ENCODE measurements at regions of chr2 and their contacts with region 1.

Region 1: GRCh38 chr2:69674316-69674670 is 30.8 kb upstream of the AAK1 start:
- DNase-seq: no peak
- H3K4me3 Mint-ChIP-seq: no peak overlapping the region
- H3K27ac Mint-ChIP-seq: no peak overlapping the region
- H3K4me1 Mint-ChIP-seq: peaks cover 25% of the 10 kb centered on the region
- H3K27me3 Mint-ChIP-seq: no peaks in the 10 kb centered on the region

Region 2: DNA sequence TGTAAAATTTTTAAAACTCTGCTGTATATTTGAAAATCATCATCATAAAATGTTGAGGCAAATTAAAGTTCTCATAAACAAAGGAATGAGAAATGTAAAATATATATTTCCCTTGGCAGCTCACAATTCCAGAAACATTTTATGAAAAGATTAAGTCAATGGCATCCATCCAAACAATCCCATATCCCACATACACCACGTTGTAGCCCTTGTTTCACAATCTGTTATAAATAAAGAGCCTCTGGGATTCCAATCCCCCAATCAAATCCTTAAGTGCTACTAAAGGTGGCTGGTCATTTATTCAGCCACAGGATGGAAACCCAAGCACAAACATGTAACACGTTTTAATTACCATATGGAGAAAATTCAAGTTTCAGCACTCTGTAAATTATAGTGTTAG is 339.0 kb before region 1 on chr2:
- intact Hi-C with region 1: no loop called
- DNase-seq: no peak
- H3K4me3 Mint-ChIP-seq: no peak overlapping the region
- H3K27ac Mint-ChIP-seq: no peak overlapping the region
- H3K4me1 Mint-ChIP-seq: no peaks in the 10 kb centered on the region
- H3K27me3 Mint-ChIP-seq: no peaks in the 10 kb centered on the region

Region 3: GRCh38 chr2:69689466-69689865 is 15.2 kb after region 1 on chr2:
- intact Hi-C with region 1: loop called (anchors 2 kb)
- DNase-seq: no peak
- H3K4me3 Mint-ChIP-seq: no peak overlapping the region
- H3K27ac Mint-ChIP-seq: no peak overlapping the region
- H3K4me1 Mint-ChIP-seq: peaks cover 52% of the 10 kb centered on the region
- H3K27me3 Mint-ChIP-seq: no peaks in the 10 kb centered on the region

Region 4: DNA sequence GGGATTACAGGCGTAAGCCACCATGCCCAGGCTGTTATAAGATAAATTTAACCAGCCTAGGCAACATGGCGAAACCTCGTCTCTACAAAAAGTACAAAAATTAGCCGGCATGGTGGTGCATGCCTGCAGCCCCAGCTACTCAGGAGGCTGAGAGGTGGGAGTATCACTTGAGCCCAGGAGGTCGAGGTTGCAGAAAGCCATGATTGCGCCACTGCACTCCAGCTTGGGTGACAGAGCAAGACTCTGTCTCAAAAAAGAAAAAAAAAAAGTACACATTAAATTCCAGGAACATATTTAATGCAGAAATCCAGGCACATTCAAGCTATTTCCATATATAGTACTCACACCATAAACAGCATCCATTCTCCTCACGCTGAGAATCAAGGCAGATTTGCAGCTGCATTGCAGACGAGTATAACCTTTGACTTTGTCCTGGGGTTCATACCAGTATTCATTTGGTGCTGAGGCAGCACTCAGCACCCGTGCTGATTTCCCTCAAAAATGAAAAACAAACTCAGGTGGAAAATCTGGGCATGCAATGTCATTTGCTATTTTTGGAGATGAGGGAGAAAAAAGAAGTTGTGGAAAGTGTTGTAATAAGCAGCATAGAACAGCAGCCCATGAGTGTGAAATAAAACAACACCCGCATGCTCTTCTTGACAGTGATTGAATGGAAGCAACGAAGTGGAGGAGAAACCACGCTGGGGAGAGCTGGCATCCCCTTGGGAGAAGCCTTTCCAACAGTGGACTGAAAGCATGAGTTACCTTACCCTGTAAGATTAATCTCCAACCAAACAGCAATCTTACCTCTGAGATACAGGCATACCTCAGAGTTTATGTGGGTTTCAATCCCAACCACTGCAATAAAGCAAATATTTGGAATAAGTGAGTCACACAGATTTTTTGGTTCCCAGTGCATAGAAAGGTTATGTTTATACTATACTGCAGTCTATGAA is 20.9 kb after region 1 on chr2:
- intact Hi-C with region 1: loop called (anchors 1 kb)
- DNase-seq: no peak
- H3K4me3 Mint-ChIP-seq: no peak overlapping the region
- H3K27ac Mint-ChIP-seq: peak overlapping the region; percentile 45
- H3K4me1 Mint-ChIP-seq: peaks cover 56% of the 10 kb centered on the region
- H3K27me3 Mint-ChIP-seq: no peaks in the 10 kb centered on the region

Region 5: DNA sequence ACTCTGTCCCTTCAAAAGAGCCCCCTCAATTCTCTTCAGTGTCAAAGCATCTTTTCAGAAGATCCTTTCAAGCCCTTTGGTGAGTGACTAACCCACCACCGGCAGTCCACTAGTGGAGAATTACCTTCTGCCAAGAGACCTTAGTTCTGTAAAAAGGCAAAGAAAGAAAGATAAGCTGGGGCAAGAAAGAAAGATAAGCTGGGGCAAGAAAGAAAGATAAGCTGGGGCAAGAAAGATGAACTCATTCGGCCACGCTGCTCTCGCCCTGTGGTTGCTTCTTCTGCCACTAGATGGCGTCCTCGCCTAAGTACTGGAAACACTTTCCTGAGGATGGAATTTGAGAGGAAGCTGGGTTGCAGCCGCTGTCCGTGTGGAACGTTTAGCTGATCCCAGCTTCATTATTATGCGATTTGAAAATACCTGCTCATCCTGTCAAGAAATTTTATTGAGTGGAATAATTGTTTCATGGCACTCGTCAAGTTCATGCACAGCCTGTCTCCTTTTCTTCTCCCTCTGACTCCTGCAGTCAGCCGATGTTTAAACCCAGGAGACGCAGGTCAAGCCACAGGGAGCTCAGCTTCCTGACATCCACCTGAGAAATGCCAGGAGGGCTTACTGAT is 50.4 kb after region 1 on chr2:
- intact Hi-C with region 1: no loop called
- DNase-seq: peak; percentile 79
- H3K4me3 Mint-ChIP-seq: peak overlapping the region; percentile 39
- H3K27ac Mint-ChIP-seq: no peak overlapping the region
- H3K4me1 Mint-ChIP-seq: peaks cover 10% of the 10 kb centered on the region
- H3K27me3 Mint-ChIP-seq: no peaks in the 10 kb centered on the region